Astrocyte of the cerebellum (primary cell): ENCODE measurements at regions of chr9 and their contacts with region 1.

Region 1: DNA sequence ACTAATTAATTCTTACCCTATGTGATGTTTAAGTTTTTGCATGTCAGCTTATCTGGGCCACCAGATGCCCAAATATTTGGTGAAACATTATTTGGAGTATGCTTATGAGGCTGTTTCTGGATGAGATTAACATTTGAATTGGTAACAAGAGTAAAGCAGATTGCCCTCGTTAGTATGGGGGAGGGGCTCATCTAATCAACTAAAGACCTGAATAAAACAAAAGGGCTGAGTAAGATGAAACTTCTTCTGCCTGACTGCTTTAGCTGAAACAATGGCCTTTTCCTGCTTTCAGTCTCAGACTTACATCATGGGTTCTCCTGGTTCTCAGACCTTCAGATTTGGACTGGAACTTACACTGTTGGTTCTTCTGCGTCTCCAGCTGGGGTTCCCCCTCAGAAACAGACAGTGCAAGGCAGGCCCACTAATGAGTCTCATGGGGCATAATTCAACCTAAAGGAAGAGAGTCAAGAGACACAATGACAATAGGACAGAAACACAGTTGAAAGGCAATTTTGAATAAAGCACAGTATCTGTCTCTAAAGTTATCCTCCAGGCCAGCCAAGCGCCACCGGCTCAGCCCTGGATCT is 288.4 kb downstream of the CAAP1 start:
- DNase-seq: no peak
- H3K4me3 ChIP-seq: no peak overlapping the region
- CTCF ChIP-seq: no peak

Region 2: DNA sequence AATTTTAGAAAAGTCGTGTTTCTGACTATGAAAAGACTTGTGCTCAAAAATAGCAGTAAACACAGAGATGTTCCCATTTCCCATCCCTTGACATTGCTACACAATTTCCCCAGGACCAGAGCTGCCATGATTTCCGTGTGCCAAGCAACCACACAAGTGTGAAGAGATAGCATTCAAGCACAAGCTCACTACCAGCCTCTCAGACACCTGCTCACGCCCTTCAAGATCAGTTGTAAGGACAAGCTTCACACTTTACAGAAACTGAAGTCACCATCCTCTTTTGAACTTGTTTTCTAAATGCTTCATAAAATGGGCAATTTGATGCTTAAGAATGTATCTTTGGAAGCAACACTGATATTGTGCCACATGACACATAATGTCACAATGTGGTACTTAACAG is 44.7 kb before region 1 on chr9:
- in situ Hi-C with region 1: loop called (anchors 5 kb)
- DNase-seq: no peak
- H3K4me3 ChIP-seq: no peak overlapping the region
- CTCF ChIP-seq: no peak

Region 3: GRCh38 chr9:26850995-26851394 is 246.8 kb after region 1 on chr9:
- in situ Hi-C with region 1: no loop called
- DNase-seq: no peak
- H3K4me3 ChIP-seq: no peak overlapping the region
- CTCF ChIP-seq: no peak